CD8-positive, alpha-beta T cell (primary cell): ENCODE measurements at regions of chr5 and their contacts with region 1.

Region 1: DNA sequence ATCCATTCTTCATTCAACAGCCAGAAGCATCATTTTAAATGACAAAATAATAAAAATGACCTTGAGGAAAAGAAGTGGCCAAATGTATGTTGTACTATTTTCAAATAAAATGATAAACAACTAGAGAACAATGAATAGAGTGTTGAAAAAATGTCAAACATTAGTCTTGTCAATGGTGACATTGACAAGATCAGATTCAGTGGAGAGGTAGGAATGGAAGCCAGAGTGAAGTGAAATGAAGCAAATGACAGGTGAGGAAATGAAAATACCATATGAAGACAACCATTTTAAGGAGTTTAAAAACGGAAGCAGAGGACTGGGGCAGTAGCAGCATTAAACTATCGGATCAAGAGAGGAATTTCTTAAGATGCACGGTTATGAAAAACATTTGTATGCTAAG is 38.2 kb upstream of the COX7C start:
- DNase-seq: no peak
- ATAC-seq: no peak
- H3K4me3 ChIP-seq: no peak overlapping the region
- H3K4me3 Mint-ChIP-seq: no peak overlapping the region
- H3K27ac ChIP-seq: no peak overlapping the region
- H3K27ac Mint-ChIP-seq: no peak overlapping the region
- H3K4me1 ChIP-seq: no peaks in the 10 kb centered on the region
- H3K4me1 Mint-ChIP-seq: no peaks in the 10 kb centered on the region
- H3K27me3 ChIP-seq: no peaks in the 10 kb centered on the region
- H3K27me3 Mint-ChIP-seq: peaks cover 29% of the 10 kb centered on the region
- CTCF ChIP-seq: no peak

Region 2: GRCh38 chr5:87803352-87803751 is 1223.8 kb after region 1 on chr5:
- CTCF ChIA-PET with region 1: no interaction called
- POLR2A ChIA-PET with region 1: no interaction called
- intact Hi-C with region 1: loop called in 1 of 2 experiments (anchors 5 kb)
- DNase-seq: no peak
- ATAC-seq: no peak
- H3K4me3 ChIP-seq: no peak overlapping the region
- H3K4me3 Mint-ChIP-seq: no peak overlapping the region
- H3K27ac ChIP-seq: no peak overlapping the region
- H3K27ac Mint-ChIP-seq: no peak overlapping the region
- H3K4me1 ChIP-seq: no peaks in the 10 kb centered on the region
- H3K4me1 Mint-ChIP-seq: no peaks in the 10 kb centered on the region
- H3K27me3 ChIP-seq: no peaks in the 10 kb centered on the region
- H3K27me3 Mint-ChIP-seq: peaks cover 6% of the 10 kb centered on the region
- CTCF ChIP-seq: no peak